ENCODE measurements at regions of chr22 and their contacts with region 1.

Region 1: DNA sequence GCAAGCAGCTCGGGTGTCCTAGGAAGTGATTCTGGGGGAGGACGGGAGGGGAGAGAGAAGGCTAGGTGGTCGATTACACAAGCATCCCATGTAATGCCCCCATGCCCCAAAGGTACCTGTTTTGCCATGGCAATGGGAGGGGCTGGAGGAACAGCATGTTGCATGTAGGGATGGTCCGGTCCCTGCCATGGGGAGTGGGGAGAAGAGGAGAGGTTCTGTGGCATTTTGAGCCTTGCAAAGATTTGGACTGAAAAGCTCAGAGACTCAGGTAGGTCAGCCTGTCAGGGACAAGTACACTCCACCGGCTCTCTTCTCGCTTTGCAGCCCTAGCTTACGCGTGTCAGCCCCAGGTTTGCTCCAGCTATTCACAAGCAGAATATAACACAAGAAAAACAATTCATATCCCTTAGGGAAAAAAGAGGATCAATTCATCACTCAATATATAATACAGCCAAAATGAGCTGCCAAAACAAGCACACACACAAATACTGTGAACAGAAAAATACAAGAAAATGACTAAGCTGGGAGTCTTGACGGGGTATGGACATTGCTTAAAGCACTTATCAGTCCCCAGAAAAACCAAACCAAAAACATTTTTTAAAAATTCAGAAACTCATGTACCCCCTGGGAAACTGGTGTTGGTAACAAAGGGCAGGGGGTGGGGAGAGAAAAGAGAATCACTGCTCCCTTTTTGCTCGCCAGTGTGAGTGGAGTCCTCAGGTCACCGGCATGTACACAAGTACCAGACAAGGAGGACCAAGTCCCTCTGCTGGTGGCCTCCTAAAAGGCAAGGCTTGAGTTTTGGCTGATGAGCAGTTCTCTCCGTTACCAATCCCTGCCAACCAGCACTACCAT is 21.6 kb downstream of the APOL5 start:
- DNase-seq: no peak
- ATAC-seq: peak; percentile 55
- H3K4me3 ChIP-seq: no peak overlapping the region
- H3K27ac ChIP-seq: no peak overlapping the region
- H3K4me1 ChIP-seq: no peaks in the 10 kb centered on the region
- H3K27me3 ChIP-seq: peaks cover 0 to 6% of the 10 kb centered on the region in 2 experiments
- CTCF ChIP-seq: no peak; a peak in 1 of 6 replicates
- EP300 ChIP-seq: no peak
- POLR2A ChIP-seq: no peak
- RAD21 ChIP-seq: no peak

Region 2: DNA sequence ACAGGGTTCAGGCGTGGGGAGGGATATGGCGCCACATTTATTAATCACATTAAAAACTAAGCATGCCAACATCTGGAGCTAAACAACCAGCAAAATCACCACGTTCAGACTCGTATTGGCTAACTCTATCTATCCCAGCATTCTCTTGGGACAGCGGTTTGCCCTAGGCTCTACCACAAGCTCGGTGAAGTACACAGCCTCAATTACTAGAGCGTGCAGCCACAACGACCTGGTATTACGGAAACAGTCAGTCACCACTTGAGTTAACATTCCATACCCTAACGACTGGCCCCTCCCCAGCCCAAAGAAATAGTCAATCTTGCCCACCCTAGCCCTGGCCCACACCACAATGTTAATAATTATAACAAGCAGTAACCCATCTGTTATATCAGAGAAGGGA is 10.5 kb after region 1 on chr22:
- CTCF ChIA-PET with region 1: interaction called, 11 read pairs
- POLR2A ChIA-PET with region 1: no interaction called
- RAD21 ChIA-PET with region 1: interaction called, 3 read pairs
- SMC1A ChIA-PET with region 1: interaction called, 3 read pairs
- in situ Hi-C with region 1: no loop called
- intact Hi-C with region 1: no loop called
- DNase-seq: peak; percentile 79
- ATAC-seq: peak; percentile 97
- H3K4me3 ChIP-seq: no peak overlapping the region
- H3K27ac ChIP-seq: no peak overlapping the region
- H3K4me1 ChIP-seq: peaks cover 11% of the 10 kb centered on the region
- H3K27me3 ChIP-seq: no peaks in the 10 kb centered on the region; a peak in 2 of 4 replicates
- CTCF ChIP-seq: no peak
- EP300 ChIP-seq: no peak
- POLR2A ChIP-seq: no peak
- RAD21 ChIP-seq: no peak

Region 3: GRCh38 chr22:35797411-35797810 is 58.1 kb after region 1 on chr22:
- CTCF ChIA-PET with region 1: no interaction called
- POLR2A ChIA-PET with region 1: no interaction called
- RAD21 ChIA-PET with region 1: no interaction called
- SMC1A ChIA-PET with region 1: no interaction called
- in situ Hi-C with region 1: no loop called
- intact Hi-C with region 1: no loop called
- DNase-seq: no peak
- ATAC-seq: no peak
- H3K4me3 ChIP-seq: no peak overlapping the region
- H3K27ac ChIP-seq: no peak overlapping the region
- H3K4me1 ChIP-seq: no peaks in the 10 kb centered on the region
- H3K27me3 ChIP-seq: no peaks in the 10 kb centered on the region
- CTCF ChIP-seq: no peak
- EP300 ChIP-seq: no peak
- POLR2A ChIP-seq: no peak
- RAD21 ChIP-seq: no peak